ENCODE measurements at regions of chr6 and their contacts with region 1.

Region 1: GRCh38 chr6:163984124-163984936 is 569.8 kb downstream of the QKI start:
- DNase-seq: no peak
- H3K4me3 ChIP-seq: no peak overlapping the region
- H3K27ac ChIP-seq: no peak overlapping the region
- H3K4me1 ChIP-seq: no peaks in the 10 kb centered on the region
- H3K27me3 ChIP-seq: no peaks in the 10 kb centered on the region
- CTCF ChIP-seq: no peak
- POLR2A ChIP-seq: no peak

Region 2: DNA sequence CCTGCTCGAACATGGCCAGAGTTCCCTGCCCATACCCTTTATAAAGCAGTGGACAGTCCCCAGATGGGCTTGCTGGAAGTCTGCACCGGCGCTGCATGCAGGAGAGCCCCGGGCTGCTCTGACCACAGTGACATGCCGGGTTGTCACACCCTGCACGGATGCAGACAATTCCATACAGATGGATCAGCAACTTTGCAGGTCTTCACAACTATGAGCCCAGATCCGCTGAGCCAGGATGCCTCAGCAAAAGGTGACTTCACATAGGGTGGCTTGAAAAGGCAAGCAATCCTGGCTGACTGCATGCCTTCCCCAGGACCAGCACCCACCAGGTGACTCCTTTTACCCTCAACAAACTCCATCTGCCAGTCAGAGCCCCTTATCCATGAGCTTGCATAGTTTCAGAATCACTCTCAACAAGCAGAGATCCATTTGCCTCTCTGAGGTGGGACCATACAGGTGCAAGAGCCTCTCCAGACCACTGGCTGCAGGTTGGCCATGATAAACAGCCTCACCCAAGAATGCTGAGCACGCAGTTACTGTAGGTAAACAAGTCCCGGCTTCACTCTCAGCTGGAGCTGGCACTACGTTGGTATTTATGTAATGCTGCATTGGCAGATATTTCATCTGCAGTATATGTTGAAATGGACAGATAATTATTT is 752.8 kb before region 1 on chr6:
- intact Hi-C with region 1: no loop called
- DNase-seq: no peak
- H3K4me3 ChIP-seq: no peak overlapping the region
- H3K27ac ChIP-seq: no peak overlapping the region
- H3K4me1 ChIP-seq: no peaks in the 10 kb centered on the region
- H3K27me3 ChIP-seq: no peaks in the 10 kb centered on the region
- CTCF ChIP-seq: no peak
- POLR2A ChIP-seq: no peak

Region 3: DNA sequence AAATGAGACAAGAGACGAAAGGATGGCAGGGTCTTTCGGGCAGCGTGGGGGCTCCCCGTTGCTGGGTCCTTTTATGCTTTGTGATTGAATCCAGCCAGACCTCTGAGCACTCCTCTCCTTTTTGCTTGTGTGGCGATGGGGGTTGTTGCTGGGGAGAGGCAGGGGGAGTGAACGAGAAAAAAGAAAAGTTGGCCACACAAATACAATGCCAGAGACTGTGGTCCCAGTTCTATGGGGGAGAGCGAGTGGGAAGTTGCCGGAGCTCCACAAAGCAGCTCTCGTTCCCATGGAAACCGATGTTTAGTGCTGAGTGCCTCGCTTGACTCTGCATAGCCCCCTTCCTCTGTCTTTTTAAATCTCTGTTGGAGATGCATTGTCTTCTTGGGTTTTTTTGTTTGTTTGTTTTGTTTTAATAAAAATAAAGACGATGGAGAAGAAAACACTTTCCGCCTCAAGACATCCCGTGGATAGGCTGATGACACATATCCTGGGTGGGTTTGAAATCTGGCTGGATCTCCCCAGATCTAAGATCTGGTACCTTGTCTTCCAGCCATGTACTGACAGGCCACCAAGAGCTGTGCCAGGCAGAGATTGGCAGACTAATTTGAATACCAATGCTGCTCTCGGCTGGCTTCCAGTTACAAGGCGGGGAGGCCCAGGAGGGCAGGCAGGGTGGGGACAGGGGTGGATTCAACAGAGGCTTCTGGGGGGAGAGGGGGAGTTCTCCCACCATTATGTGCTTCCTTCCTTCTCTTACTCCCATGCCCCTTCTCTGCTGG is 40.5 kb before region 1 on chr6:
- intact Hi-C with region 1: loop called (anchors 2 kb)
- DNase-seq: no peak
- H3K4me3 ChIP-seq: peak overlapping the region in 1 of 3 donors; percentile 4
- H3K27ac ChIP-seq: no peak overlapping the region
- H3K4me1 ChIP-seq: no peaks in the 10 kb centered on the region
- H3K27me3 ChIP-seq: no peaks in the 10 kb centered on the region
- CTCF ChIP-seq: no peak
- POLR2A ChIP-seq: no peak

Region 4: GRCh38 chr6:164640946-164641345 is 656.6 kb after region 1 on chr6:
- intact Hi-C with region 1: no loop called
- DNase-seq: no peak
- H3K4me3 ChIP-seq: no peak overlapping the region
- H3K27ac ChIP-seq: no peak overlapping the region
- H3K4me1 ChIP-seq: no peaks in the 10 kb centered on the region
- H3K27me3 ChIP-seq: no peaks in the 10 kb centered on the region
- CTCF ChIP-seq: no peak
- POLR2A ChIP-seq: no peak

Measured in breast epithelium (tissue), 4 donors.